HepG2 (cell line): ENCODE measurements at regions of chr4 and their contacts with region 1.

Region 1: GRCh38 chr4:22338796-22339195 is 177.1 kb downstream of the ADGRA3 start:
- DNase-seq: no peak
- ATAC-seq: no peak
- H3K4me3 ChIP-seq: no peak overlapping the region
- H3K27ac ChIP-seq: no peak overlapping the region
- H3K4me1 ChIP-seq: no peaks in the 10 kb centered on the region
- H3K27me3 ChIP-seq: no peaks in the 10 kb centered on the region
- CTCF ChIP-seq: no peak
- EP300 ChIP-seq: no peak
- POLR2A ChIP-seq: no peak
- RAD21 ChIP-seq: no peak

Region 2: GRCh38 chr4:22237155-22237751 is 101.5 kb before region 1 on chr4:
- CTCF ChIA-PET with region 1: no interaction called
- POLR2A ChIA-PET with region 1: no interaction called
- in situ Hi-C with region 1: no loop called
- intact Hi-C with region 1: loop called (anchors 10 kb)
- DNase-seq: peak; percentile 15
- ATAC-seq: peak; percentile 62
- H3K4me3 ChIP-seq: no peak overlapping the region
- H3K27ac ChIP-seq: no peak overlapping the region
- H3K4me1 ChIP-seq: peaks cover 14% of the 10 kb centered on the region
- H3K27me3 ChIP-seq: no peaks in the 10 kb centered on the region; a peak in 1 of 5 replicates
- CTCF ChIP-seq: peak; percentile 46
- EP300 ChIP-seq: no peak
- POLR2A ChIP-seq: no peak
- RAD21 ChIP-seq: no peak

Region 3: DNA sequence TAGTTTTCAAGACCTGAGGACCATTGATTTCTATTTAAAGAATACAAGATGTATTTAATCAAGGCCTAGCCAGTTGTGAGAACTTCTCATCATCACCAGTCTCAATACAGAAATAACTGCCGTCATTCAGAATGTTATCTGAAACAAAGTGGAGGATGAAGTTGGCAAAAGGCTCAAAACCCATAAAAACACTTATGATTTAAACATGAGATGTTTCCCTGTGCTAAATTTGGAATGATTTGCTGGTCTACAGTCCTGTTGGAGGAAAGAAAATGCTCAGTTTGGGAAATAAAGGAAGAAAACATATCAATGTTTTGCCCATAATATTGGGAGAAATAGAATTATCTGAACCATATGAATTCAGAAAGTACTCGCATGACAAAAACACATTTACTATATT is 15.1 kb before region 1 on chr4:
- CTCF ChIA-PET with region 1: no interaction called
- POLR2A ChIA-PET with region 1: no interaction called
- in situ Hi-C with region 1: no loop called
- intact Hi-C with region 1: no loop called
- DNase-seq: no peak
- ATAC-seq: no peak
- H3K4me3 ChIP-seq: no peak overlapping the region
- H3K27ac ChIP-seq: no peak overlapping the region
- H3K4me1 ChIP-seq: no peaks in the 10 kb centered on the region
- H3K27me3 ChIP-seq: no peaks in the 10 kb centered on the region
- CTCF ChIP-seq: no peak
- EP300 ChIP-seq: no peak
- POLR2A ChIP-seq: no peak
- RAD21 ChIP-seq: no peak